ENCODE measurements at regions of chr5 and their contacts with region 1.

Region 1: DNA sequence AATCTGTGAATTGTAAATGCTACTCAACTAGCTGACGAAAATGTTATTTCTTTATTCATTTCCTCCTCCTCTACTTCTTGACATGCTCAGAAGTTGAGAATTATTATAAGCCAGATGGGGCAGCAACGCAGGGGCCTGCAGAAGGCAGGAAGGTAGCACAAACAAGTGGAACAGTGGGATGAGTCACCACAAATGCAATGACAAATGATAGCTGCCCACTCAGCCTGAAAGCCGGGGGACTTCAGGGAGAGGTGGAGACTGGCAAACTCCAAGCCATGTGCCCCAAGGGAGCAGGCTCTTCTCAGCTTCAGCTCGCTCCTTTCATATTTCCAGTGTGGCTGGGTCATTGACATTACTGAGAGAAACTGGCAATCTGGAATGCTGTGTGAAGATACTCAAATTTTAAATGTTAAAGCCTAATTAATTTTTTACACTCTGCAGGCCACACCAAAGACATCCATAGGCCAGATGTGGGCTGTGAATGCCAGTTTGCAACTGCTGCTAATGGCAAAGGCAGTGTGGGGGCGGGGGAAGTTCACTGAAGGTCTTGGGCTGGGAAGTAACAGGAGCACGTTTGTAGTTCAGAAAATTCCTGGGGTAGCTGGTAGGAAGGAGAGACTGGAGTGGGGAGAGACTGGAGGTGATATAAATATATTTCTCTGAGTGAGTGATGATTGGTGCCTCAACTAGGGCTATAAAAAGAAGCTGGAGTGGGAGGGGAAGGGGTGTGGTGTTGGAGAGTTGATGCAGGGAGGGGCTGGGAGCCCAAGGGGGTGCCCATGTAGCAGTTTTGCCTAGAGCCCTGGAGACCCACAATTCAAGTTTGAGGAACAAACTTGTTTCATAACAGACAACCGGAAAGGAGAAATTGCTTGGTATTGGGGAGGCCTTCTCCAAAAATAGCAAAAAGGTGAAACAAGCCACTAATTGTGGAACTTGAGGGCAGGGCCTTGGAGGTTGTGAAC is 20.8 kb upstream of the ADRB2 start:
- DNase-seq: peak; percentile 70
- H3K4me3 Mint-ChIP-seq: no peak overlapping the region
- H3K27ac Mint-ChIP-seq: peak overlapping the region; percentile 16
- H3K4me1 Mint-ChIP-seq: peaks cover 62% of the 10 kb centered on the region
- H3K27me3 Mint-ChIP-seq: peaks cover 15% of the 10 kb centered on the region

Region 2: DNA sequence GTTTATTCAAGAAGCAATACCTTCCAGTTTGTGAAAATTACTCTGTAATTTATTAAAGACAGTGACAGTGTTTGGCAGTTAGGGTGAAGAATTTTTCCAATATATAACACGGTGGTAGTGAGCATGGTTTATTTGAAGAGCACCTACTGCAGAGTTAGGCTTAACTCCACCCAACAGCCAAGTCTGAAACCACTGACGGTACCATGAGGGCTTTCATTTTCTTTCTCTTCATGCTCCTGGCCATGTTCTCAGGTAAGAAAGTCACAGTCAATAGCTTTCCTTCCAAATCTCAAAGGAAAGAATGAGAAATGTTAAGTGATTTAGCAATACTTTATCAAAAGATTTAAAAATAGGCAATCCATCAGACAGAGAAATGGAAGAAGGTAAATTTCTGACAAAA is 567.2 kb before region 1 on chr5 and contains the start of gene MARCOL:
- CTCF ChIA-PET with region 1: no interaction called
- POLR2A ChIA-PET with region 1: no interaction called
- intact Hi-C with region 1: no loop called
- DNase-seq: no peak
- H3K4me3 Mint-ChIP-seq: no peak within 1 kb of the TSS
- H3K27ac Mint-ChIP-seq: no peak within 1 kb of the TSS
- H3K4me1 Mint-ChIP-seq: no peaks in the 10 kb centered on the region
- H3K27me3 Mint-ChIP-seq: peaks cover 3% of the 10 kb centered on the region
- total RNA-seq, gene MARCOL: not detected

Region 3: DNA sequence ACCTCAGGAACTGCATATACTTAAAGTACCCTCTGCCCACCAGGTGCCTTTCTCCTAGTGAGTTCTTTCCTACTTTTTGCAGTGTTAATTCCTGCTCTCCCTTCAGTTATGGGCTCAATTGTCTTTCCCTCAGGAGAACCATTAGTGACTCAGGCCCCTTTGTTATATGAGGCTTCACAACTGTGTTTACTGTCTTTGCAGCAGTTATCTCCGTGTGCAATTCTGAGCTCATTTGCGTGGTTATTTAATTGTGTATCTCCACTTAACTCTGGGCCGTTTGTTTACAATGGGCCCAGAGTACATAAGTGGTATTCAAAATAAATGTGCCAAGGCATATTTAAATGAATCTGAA is 412.2 kb before region 1 on chr5:
- CTCF ChIA-PET with region 1: no interaction called
- POLR2A ChIA-PET with region 1: no interaction called
- intact Hi-C with region 1: no loop called
- DNase-seq: no peak
- H3K4me3 Mint-ChIP-seq: no peak overlapping the region
- H3K27ac Mint-ChIP-seq: no peak overlapping the region
- H3K4me1 Mint-ChIP-seq: peaks cover 66% of the 10 kb centered on the region
- H3K27me3 Mint-ChIP-seq: no peaks in the 10 kb centered on the region

Region 4: GRCh38 chr5:148443998-148444397 is 361.6 kb before region 1 on chr5:
- CTCF ChIA-PET with region 1: no interaction called
- POLR2A ChIA-PET with region 1: no interaction called
- intact Hi-C with region 1: loop called (anchors 10 kb)
- DNase-seq: peak; percentile 27
- H3K4me3 Mint-ChIP-seq: no peak overlapping the region
- H3K27ac Mint-ChIP-seq: no peak overlapping the region
- H3K4me1 Mint-ChIP-seq: no peaks in the 10 kb centered on the region
- H3K27me3 Mint-ChIP-seq: no peaks in the 10 kb centered on the region

Region 5: DNA sequence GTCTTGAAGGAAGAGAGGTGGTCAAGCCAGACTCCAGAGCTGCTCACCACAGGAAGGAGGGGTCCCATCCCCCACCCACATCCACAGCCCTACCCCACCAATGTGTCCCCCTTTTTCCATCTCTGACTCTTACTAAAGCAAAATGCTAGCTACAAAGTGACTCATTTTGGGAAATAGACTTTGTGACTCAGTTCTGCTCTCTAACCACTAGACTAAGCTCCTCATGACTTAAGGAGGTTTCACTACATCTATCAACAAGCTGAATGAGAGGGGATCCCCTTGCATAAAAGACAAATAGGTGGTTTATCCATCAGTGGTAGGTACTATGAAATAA is 14.3 kb before region 1 on chr5:
- CTCF ChIA-PET with region 1: interaction called, 12 read pairs
- POLR2A ChIA-PET with region 1: interaction called, 13 read pairs
- intact Hi-C with region 1: loop called (anchors 1 kb)
- DNase-seq: peak; percentile 77
- H3K4me3 Mint-ChIP-seq: no peak overlapping the region
- H3K27ac Mint-ChIP-seq: no peak overlapping the region
- H3K4me1 Mint-ChIP-seq: peaks cover 24% of the 10 kb centered on the region
- H3K27me3 Mint-ChIP-seq: peaks cover 33% of the 10 kb centered on the region

Region 6: GRCh38 chr5:148820461-148821395 is 15.1 kb after region 1 on chr5:
- CTCF ChIA-PET with region 1: interaction called, 23 read pairs
- POLR2A ChIA-PET with region 1: interaction called, 3 read pairs
- intact Hi-C with region 1: no loop called
- DNase-seq: no peak
- H3K4me3 Mint-ChIP-seq: no peak overlapping the region
- H3K27ac Mint-ChIP-seq: no peak overlapping the region
- H3K4me1 Mint-ChIP-seq: peaks cover 6% of the 10 kb centered on the region
- H3K27me3 Mint-ChIP-seq: peaks cover 5% of the 10 kb centered on the region

Region 7: GRCh38 chr5:148826053-148826738 is 20.6 kb after region 1 on chr5 and contains the start of gene ADRB2:
- CTCF ChIA-PET with region 1: interaction called, 23 read pairs
- POLR2A ChIA-PET with region 1: interaction called, 3 read pairs
- intact Hi-C with region 1: loop called (anchors 1 kb)
- DNase-seq: peak; percentile 93
- H3K4me3 Mint-ChIP-seq: peak within 1 kb of the TSS; percentile 80
- H3K27ac Mint-ChIP-seq: peak within 1 kb of the TSS; percentile 46
- H3K4me1 Mint-ChIP-seq: peaks cover 35% of the 10 kb centered on the region
- H3K27me3 Mint-ChIP-seq: peaks cover 7% of the 10 kb centered on the region
- total RNA-seq, gene ADRB2: 0.36 to 0.52 TPM

Region 8: GRCh38 chr5:149345147-149345875 is 539.7 kb after region 1 on chr5 and contains the start of gene GRPEL2:
- CTCF ChIA-PET with region 1: no interaction called
- POLR2A ChIA-PET with region 1: no interaction called
- intact Hi-C with region 1: loop called (anchors 5 kb)
- DNase-seq: peak; percentile 97
- H3K4me3 Mint-ChIP-seq: peak within 1 kb of the TSS; percentile 97
- H3K27ac Mint-ChIP-seq: peak within 1 kb of the TSS; percentile 93
- H3K4me1 Mint-ChIP-seq: peaks cover 46% of the 10 kb centered on the region
- H3K27me3 Mint-ChIP-seq: no peaks in the 10 kb centered on the region
- total RNA-seq, gene GRPEL2: 32.9 to 37.2 TPM